ENCODE measurements at regions of chr12 and their contacts with region 1.

Region 1: GRCh38 chr12:131755305-131756113 is 44.6 kb downstream of the SFSWAP start:
- DNase-seq: peak; percentile 44

Region 2: GRCh38 chr12:131735476-131736445 is 19.7 kb before region 1 on chr12:
- intact Hi-C with region 1: loop called in 1 of 2 experiments (anchors 2 kb)
- DNase-seq: no peak